ENCODE measurements at regions of chr4 and their contacts with region 1.

Region 1: DNA sequence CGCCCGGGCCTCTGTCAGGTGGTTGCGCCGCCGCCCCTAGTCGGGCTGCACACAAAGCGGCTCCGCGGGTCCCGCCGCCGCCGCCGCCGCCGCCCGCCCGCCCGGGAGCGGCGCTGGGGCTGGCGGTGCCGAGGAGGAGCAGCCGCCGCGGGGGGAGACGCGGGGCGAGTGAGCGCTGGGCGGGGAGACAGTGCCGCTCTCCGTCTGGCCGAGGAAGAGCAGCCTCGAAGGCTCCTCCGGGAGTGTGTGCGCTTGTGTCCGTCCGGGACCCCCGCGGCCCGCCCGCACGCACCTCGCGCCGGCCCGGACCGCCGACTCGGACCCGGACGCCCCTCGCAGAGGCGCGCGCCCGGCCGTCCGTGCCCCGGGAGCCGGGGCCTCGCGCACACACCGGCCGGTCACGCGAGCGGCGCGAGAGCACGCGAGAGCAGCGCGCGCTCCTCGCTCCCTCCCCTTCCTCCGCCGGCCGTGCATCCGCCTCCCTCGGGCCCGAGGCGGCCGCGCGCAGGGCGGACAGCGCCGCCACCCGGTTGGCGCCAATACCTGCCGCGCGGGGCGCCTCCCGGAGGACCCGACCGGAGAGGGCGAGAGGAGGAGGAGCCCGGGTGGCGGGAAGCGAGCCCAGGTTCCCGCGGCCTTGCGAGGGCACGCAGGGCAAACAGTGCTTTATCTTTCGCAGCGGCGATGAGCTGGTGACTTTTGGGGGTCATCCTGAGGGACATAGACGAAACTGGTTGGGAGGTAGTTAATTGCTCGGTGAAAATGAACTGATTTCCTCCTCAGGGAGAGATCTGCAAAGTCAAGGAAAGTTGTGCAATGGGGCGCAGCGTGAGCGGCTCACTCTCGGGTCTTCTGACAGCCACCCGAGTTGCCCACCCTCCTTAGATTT is at the start of gene PDS5A:
- DNase-seq: peak; percentile 92 to 95
- ATAC-seq: peak; percentile 95
- H3K4me3 ChIP-seq: peak within 1 kb of the TSS; percentile 81 to 94
- H3K27ac ChIP-seq: peak within 1 kb of the TSS; percentile 31 to 77
- H3K4me1 ChIP-seq: no peaks in the 10 kb centered on the region
- H3K27me3 ChIP-seq: no peaks in the 10 kb centered on the region
- total RNA-seq, gene PDS5A: 50.9 to 73.3 TPM

Region 2: GRCh38 chr4:39458505-39459300 is 519.0 kb before region 1 on chr4 and contains the starts of genes LIAS and RPL9:
- intact Hi-C with region 1: loop called in 1 of 2 experiments (anchors 2 kb)
- DNase-seq: peak; percentile 97 to 98
- ATAC-seq: peak; percentile 99
- H3K4me3 ChIP-seq: peak within 1 kb of the TSS; percentile 60 to 69
- H3K27ac ChIP-seq: peak within 1 kb of the TSS; percentile 81 to 95
- H3K4me1 ChIP-seq: peaks cover 0 to 1% of the 10 kb centered on the region in 2 donors
- H3K27me3 ChIP-seq: no peaks in the 10 kb centered on the region
- total RNA-seq, gene LIAS: 5.9 to 12.6 TPM
- total RNA-seq, gene RPL9: 1,118 to 1,464 TPM

Region 3: GRCh38 chr4:39469429-39470077 is 508.2 kb before region 1 on chr4:
- intact Hi-C with region 1: loop called in 1 of 2 experiments (anchors 5 kb)
- DNase-seq: no peak
- ATAC-seq: peak; percentile 93
- H3K4me3 ChIP-seq: no peak overlapping the region
- H3K27ac ChIP-seq: peak overlapping the region in 1 of 2 donors; percentile 64
- H3K4me1 ChIP-seq: no peaks in the 10 kb centered on the region
- H3K27me3 ChIP-seq: no peaks in the 10 kb centered on the region

Region 4: DNA sequence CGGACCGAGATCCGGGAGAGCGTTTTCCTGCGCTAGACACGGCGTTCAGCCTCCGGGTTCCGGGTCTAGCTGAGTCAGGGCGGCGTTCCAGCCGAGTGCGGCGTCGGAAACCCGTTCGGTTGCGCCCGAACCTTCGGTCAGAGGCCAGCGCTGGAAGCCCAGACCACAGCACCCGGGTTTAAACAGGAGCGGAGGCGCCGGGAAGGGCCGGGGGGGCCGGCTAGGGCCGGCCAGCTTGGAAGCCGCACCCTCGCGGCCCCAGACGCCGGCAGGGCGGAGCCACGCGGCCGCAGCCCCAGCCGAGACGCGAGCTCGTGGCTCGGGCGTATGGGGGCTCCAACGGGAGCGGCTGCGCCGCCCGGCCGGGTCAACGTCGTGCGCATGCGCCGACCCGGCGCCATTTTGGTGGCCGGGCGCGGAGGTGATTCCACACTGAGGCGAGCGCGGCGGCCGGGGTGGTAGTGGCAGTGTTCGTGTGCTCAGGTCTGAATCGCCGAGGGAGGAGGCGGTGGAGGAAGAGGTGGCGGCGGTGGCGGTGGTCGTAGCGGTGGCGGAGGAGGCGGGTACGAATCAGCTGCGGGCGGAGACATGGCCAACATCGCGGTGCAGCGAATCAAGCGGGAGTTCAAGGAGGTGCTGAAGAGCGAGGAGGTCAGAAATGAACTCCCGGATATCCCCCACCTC is 279.9 kb before region 1 on chr4 and contains the start of gene UBE2K:
- intact Hi-C with region 1: loop called (anchors 1 to 2 kb)
- DNase-seq: peak; percentile 93 to 97
- ATAC-seq: peak; percentile 99
- H3K4me3 ChIP-seq: peak within 1 kb of the TSS; percentile 59 to 74
- H3K27ac ChIP-seq: peak within 1 kb of the TSS; percentile 25 to 92
- H3K4me1 ChIP-seq: no peaks in the 10 kb centered on the region
- H3K27me3 ChIP-seq: no peaks in the 10 kb centered on the region
- total RNA-seq, gene UBE2K: 56.8 to 59.5 TPM

Region 5: DNA sequence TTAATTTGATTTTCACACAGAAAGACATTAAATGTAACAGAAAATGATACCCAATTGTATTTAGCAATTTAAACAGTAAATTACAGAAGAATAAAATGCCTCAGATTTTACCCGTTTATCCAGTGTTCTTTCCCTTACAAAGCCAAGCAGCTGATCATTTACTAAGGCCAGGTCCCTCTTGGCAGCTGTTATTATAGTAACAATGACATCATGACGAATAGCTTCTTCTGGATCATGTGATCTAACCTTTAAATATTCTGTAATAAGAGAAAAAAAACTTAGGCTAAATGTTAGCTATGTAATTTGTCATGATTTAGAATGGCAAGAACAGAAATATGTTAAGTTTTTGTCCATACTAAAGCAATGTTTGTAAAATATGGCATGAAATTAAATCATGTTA is 69.4 kb before region 1 on chr4:
- intact Hi-C with region 1: loop called (anchors 5 to 10 kb)
- DNase-seq: no peak
- ATAC-seq: no peak
- H3K4me3 ChIP-seq: no peak overlapping the region
- H3K27ac ChIP-seq: no peak overlapping the region
- H3K4me1 ChIP-seq: no peaks in the 10 kb centered on the region
- H3K27me3 ChIP-seq: no peaks in the 10 kb centered on the region

Region 6: GRCh38 chr4:39913471-39913870 is 64.3 kb before region 1 on chr4:
- intact Hi-C with region 1: loop called (anchors 5 to 10 kb)
- DNase-seq: no peak
- ATAC-seq: no peak
- H3K4me3 ChIP-seq: no peak overlapping the region
- H3K27ac ChIP-seq: no peak overlapping the region
- H3K4me1 ChIP-seq: no peaks in the 10 kb centered on the region
- H3K27me3 ChIP-seq: no peaks in the 10 kb centered on the region

Region 7: GRCh38 chr4:40046311-40046980 is 68.7 kb after region 1 on chr4:
- intact Hi-C with region 1: no loop called
- DNase-seq: no peak
- ATAC-seq: no peak
- H3K4me3 ChIP-seq: no peak overlapping the region
- H3K27ac ChIP-seq: peak overlapping the region in 1 of 2 donors; percentile 42
- H3K4me1 ChIP-seq: peaks cover 0 to 2% of the 10 kb centered on the region in 2 donors
- H3K27me3 ChIP-seq: no peaks in the 10 kb centered on the region

Measured in aorta (tissue), 5 donors.